CD4-positive, alpha-beta T cell (primary cell): ENCODE measurements at regions of chr14 and their contacts with region 1.

Region 1: GRCh38 chr14:20873370-20874177 is 17.6 kb upstream of the RNASE3 start:
- DNase-seq: peak; percentile 57 to 85 (median 70)
- ATAC-seq: peak; percentile 71
- H3K4me3 ChIP-seq: no peak overlapping the region
- H3K4me3 Mint-ChIP-seq: no peak overlapping the region
- H3K27ac ChIP-seq: no peak overlapping the region
- H3K27ac Mint-ChIP-seq: no peak overlapping the region
- H3K4me1 ChIP-seq: peaks cover 10% of the 10 kb centered on the region
- H3K4me1 Mint-ChIP-seq: peaks cover 15% of the 10 kb centered on the region
- H3K27me3 ChIP-seq: peaks cover 0 to 6% of the 10 kb centered on the region in 2 experiments
- H3K27me3 Mint-ChIP-seq: peaks cover 4% of the 10 kb centered on the region
- CTCF ChIP-seq: peak; percentile 76

Region 2: GRCh38 chr14:20697273-20698017 is 176.1 kb before region 1 on chr14:
- CTCF ChIA-PET with region 1: interaction called, 9 read pairs
- POLR2A ChIA-PET with region 1: interaction called, 3 read pairs
- intact Hi-C with region 1: loop called (anchors 1 kb)
- DNase-seq: peak; percentile 42 to 83 (median 56)
- ATAC-seq: peak; percentile 80
- H3K4me3 ChIP-seq: no peak overlapping the region
- H3K4me3 Mint-ChIP-seq: no peak overlapping the region
- H3K27ac ChIP-seq: no peak overlapping the region
- H3K27ac Mint-ChIP-seq: no peak overlapping the region
- H3K4me1 ChIP-seq: no peaks in the 10 kb centered on the region
- H3K4me1 Mint-ChIP-seq: no peaks in the 10 kb centered on the region
- H3K27me3 ChIP-seq: no peaks in the 10 kb centered on the region
- H3K27me3 Mint-ChIP-seq: no peaks in the 10 kb centered on the region
- CTCF ChIP-seq: peak; percentile 78

Region 3: GRCh38 chr14:20757965-20758364 is 115.6 kb before region 1 on chr14:
- CTCF ChIA-PET with region 1: interaction called, 8 read pairs
- POLR2A ChIA-PET with region 1: no interaction called
- intact Hi-C with region 1: loop called in 1 of 2 experiments (anchors 5 kb)
- DNase-seq: peak in 12 of 14 experiments; percentile 4 to 57 (median 22)
- ATAC-seq: no peak
- H3K4me3 ChIP-seq: no peak overlapping the region
- H3K4me3 Mint-ChIP-seq: no peak overlapping the region
- H3K27ac ChIP-seq: no peak overlapping the region
- H3K27ac Mint-ChIP-seq: no peak overlapping the region
- H3K4me1 ChIP-seq: no peaks in the 10 kb centered on the region
- H3K4me1 Mint-ChIP-seq: no peaks in the 10 kb centered on the region
- H3K27me3 ChIP-seq: peaks cover 0 to 4% of the 10 kb centered on the region in 2 experiments
- H3K27me3 Mint-ChIP-seq: no peaks in the 10 kb centered on the region
- CTCF ChIP-seq: peak; percentile 39